Activated CD8-positive, alpha-beta memory T cell treated with anti-CD3 and anti-CD28 coated beads, Interleukin-2, amount 10 ng/mL, durations not matched to agents 7 days and 5 days (primary cell): ENCODE measurements at regions of chr17 and their contacts with region 1.

Region 1: DNA sequence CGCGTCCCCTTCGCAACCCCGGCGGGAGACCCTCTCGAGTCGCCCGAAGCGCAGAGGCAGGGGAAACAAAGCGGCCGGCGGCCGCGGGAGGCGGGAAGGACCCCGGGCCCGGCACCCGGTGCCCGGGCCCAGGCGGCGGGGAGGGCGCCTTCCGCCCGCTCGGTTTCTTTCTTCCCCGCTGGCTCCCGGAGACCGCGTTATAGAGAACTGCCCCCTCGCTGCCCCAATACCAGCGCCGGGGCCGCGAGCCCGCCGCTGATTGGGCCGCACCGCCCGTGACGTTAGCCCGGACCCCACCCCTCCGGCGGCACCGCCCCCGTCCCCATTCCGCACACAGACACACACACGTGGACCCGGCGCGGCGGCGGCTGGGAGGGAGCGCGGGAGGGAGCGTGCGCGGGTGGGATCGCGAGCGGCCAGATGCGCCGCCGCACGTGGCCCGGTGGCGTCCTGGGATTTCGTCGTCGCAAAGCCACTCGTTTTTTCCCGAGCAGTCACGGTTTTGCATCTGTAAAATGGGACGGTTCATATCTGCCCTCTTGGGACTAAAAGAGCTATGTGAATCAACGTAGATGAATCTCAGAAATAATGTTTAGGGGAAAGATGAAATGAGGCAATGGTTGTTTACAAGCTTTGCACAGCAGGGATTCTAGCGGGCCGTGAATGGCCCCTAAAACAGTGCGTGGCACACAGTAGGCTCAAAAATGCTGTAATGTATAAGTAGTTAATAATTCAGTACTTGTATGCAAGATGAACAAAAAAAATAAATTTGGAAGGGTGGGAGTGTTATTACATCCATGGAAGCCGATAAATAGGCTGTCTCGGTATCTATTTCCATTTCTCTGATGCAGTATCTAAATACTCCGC is at the start of gene EPOP:
- DNase-seq: peak; percentile 90
- ATAC-seq: peak; percentile 91
- H3K4me3 Mint-ChIP-seq: peak within 1 kb of the TSS; percentile 63
- H3K27ac Mint-ChIP-seq: peak within 1 kb of the TSS; percentile 14
- H3K4me1 Mint-ChIP-seq: peaks cover 32% of the 10 kb centered on the region
- H3K27me3 Mint-ChIP-seq: peaks cover 26% of the 10 kb centered on the region
- total RNA-seq, gene EPOP: 10.4 to 20.1 TPM

Region 2: DNA sequence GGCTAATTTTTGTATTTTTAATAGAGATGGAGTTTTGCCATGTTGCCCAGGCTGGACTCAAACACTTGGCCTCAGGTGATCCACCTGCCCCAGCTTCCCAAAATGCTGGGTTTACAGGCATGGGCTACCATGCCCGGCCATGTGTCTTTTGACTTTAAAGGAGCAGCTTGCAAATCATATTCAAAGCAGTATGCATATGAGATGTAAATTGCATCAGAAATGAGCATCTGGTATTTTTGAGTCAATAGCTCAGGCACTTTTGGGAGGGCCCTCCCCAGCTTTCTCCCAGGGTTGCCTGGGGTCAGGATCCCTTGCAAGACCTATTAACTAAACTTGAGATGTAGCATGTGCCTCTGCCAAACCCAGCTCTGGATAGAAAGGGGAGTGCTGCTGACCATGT is 21.8 kb before region 1 on chr17:
- CTCF ChIA-PET with region 1: no interaction called
- DNase-seq: no peak
- ATAC-seq: no peak
- H3K4me3 Mint-ChIP-seq: no peak overlapping the region
- H3K27ac Mint-ChIP-seq: no peak overlapping the region
- H3K4me1 Mint-ChIP-seq: peaks cover 8% of the 10 kb centered on the region
- H3K27me3 Mint-ChIP-seq: peaks cover 25% of the 10 kb centered on the region

Region 3: DNA sequence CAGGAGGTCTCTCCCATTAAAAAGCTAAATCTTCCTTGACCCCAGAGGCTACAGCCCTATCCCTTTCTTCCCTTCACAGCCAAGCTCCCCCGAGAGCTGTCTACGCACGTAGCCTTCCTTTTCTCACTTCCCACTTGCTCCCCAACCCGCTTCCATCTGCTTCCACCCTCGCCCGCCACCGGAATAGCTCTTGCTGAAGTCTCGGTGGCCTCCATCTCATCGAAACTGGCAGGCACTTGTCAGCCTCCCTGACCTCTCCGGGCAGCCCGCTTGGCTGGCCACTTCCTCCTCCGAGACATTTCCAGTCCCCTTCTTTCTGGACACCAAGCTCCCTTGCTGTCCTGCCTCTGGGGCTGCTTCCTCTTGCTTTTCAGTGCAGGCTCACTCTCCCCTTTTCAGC is 10.5 kb after region 1 on chr17:
- CTCF ChIA-PET with region 1: interaction called, 11 read pairs
- DNase-seq: no peak
- ATAC-seq: no peak
- H3K4me3 Mint-ChIP-seq: no peak overlapping the region
- H3K27ac Mint-ChIP-seq: no peak overlapping the region
- H3K4me1 Mint-ChIP-seq: peaks cover 4% of the 10 kb centered on the region
- H3K27me3 Mint-ChIP-seq: peaks cover 8% of the 10 kb centered on the region

Region 4: DNA sequence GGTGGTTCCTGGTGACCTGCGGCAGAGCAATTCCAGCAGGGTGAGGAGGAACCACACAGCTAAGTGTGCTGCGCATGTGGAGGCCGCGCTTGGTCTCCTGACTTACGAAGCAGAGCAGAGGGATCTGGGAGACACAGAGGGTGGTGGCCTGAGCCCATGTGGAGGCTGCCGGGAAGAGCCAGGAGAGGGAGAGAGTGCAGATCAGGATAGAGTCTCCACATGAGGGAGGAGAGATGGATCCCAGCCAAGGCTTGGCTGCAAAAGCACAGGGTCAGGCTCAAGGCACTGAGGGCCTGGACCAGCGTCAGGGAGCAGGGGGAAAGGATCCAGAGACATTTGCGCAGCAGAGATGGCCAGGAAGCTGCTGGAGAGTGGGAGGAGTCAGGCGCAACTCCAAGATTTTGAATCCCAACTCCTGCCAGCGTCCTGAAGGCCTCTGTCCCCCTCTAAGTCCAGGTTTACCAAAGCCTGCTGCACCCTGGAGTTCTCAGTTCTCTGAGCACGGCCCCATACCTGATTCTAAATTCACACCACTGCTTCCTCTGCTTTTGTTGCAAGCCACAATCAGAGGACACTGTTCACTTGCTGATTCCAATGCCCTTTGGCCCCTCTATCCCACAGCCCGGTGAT is 18.8 kb after region 1 on chr17:
- CTCF ChIA-PET with region 1: interaction called, 23 read pairs
- DNase-seq: no peak
- ATAC-seq: no peak
- H3K4me3 Mint-ChIP-seq: no peak overlapping the region
- H3K27ac Mint-ChIP-seq: no peak overlapping the region
- H3K4me1 Mint-ChIP-seq: peaks cover 23% of the 10 kb centered on the region
- H3K27me3 Mint-ChIP-seq: no peaks in the 10 kb centered on the region

Region 5: DNA sequence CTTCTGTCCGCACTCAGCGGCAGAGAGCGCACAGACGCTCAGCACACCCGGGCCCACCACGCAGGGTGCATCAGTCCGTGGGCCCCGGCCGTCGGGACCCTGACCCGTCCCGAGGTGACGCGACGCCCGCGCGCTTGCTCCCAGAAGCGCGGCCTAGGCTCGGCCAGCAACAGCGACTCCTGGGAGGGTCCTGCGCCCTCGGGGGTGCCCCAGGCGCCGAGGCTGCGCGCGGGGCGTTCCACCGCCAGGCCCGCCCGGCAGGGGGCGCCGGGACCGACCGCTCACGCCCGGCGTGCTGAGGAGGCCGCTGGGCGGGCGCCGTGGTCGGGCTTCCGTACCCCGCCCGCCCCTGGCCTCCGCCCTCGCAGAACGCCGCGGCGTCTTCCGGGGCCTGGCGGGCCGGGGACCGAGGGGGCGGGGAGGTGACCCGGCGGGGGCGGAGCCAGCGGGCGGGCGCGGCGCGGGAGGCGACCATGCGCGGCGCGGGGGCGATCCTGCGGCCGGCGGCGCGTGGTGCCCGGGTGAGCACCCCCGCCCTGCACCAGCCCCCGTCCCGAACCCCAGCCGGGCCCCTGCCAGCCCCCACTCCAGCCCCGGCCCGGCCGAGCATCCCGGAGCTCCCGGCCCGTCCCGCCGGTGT is 55.0 kb after region 1 on chr17 and contains the start of gene CISD3:
- CTCF ChIA-PET with region 1: interaction called, 232 read pairs
- DNase-seq: peak; percentile 89
- ATAC-seq: peak; percentile 86
- H3K4me3 Mint-ChIP-seq: peak within 1 kb of the TSS; percentile 94
- H3K27ac Mint-ChIP-seq: peak within 1 kb of the TSS; percentile 95
- H3K4me1 Mint-ChIP-seq: peaks cover 70% of the 10 kb centered on the region
- H3K27me3 Mint-ChIP-seq: no peaks in the 10 kb centered on the region
- total RNA-seq, gene CISD3: 51.3 to 54.3 TPM

Region 6: GRCh38 chr17:38752119-38752929 is 77.3 kb after region 1 on chr17 and contains the start of gene PSMB3:
- CTCF ChIA-PET with region 1: interaction called, 13 read pairs
- DNase-seq: peak; percentile 99
- ATAC-seq: peak; percentile 89
- H3K4me3 Mint-ChIP-seq: peak within 1 kb of the TSS; percentile 91
- H3K27ac Mint-ChIP-seq: peak within 1 kb of the TSS; percentile 93
- H3K4me1 Mint-ChIP-seq: peaks cover 41% of the 10 kb centered on the region
- H3K27me3 Mint-ChIP-seq: peaks cover 32% of the 10 kb centered on the region
- total RNA-seq, gene PSMB3: 246 to 303 TPM